CD14-positive monocyte (primary cell): ENCODE measurements at regions of chr1 and their contacts with region 1.

Region 1: DNA sequence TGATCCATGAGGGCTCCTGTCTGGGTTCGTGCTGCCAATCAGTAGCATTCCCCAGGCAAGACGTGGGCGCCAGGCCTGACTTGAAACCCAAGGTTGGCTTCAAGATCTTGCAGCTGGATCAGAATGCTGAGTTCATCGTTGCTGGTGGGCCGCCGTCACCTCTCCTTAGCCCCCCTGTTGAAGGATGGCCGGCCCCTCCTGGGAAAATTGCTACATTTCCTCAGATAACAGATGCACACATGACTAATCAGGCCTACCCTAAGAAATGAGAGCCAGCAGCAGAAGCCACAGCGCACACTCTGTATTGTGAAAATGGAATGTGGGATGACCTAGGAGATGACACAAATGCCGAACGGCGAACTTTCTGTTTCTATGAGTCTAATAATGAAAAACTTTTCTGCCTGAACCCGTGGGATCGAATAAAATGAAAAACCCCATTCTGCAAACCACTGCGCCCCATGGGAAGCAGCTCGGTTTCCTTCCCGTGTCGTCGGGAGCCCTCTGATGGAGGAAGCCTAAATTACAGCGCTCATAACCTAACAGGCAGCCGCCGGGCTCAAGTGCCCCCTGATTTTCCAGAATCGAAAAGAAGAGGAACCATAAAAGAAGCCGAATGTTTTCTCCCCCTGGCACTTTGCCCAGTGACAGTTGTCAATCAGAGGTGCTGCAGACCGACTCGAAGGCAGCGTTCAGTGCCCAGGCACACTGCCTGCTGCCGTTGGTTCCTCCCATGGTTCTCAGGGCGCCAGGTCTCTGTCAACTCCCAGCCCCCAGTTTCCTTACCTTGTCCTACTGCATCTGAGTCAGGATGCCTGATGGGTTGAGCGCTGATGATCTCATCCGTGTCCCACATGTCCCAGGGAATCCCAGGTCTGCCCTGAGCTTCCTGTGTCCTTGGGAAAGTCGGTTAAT is 38.2 kb upstream of the H6PD start:
- DNase-seq: peak; percentile 57 to 74 (median 64)
- H3K4me3 ChIP-seq: peak overlapping the region in 1 of 3 experiments; percentile 51
- H3K4me3 Mint-ChIP-seq: peak overlapping the region; percentile 66 to 83
- H3K27ac ChIP-seq: no peak overlapping the region
- H3K27ac Mint-ChIP-seq: peak overlapping the region; percentile 35 to 85 (median 62)
- H3K4me1 ChIP-seq: peaks cover 19 to 28% of the 10 kb centered on the region in 2 donors
- H3K4me1 Mint-ChIP-seq: peaks cover 40% of the 10 kb centered on the region
- H3K27me3 ChIP-seq: peaks cover 25 to 43% of the 10 kb centered on the region in 2 donors
- H3K27me3 Mint-ChIP-seq: peaks cover 42 to 53% (median 43%) of the 10 kb centered on the region in 3 donors
- CTCF ChIP-seq: peak; percentile 86

Region 2: DNA sequence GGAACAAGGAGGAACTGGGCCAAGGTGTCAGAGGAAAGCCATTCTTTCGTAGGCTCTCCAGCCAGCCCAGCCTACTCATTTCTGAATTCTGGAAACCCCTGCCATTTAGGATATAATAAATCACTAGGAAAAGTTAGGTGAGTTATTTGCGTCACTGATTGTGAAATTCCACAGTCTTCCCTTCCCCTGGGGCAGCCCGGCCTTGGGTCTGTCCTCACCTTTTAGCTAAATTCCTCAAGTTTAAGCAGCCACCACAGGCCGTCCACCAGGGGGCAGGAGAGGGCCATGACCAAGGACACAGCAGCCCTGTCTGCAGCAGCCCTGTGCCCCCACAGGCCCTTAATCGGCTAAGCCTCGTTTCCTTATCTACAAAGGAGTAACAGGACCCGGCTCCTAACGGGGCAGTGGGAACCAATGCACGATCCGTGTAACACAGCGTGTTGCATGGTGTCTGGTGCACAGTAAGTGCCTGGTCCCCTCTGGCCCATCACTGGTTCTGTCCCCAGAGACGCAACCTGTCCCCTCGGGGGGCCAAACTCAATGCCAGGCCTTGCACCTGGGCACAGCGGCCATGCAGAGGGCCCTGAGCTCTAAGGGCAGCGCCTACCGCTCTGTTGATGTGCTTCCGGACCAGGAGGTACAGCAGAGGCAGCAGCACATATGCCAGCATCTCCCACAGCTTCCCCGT is 85.6 kb before region 1 on chr1:
- intact Hi-C with region 1: loop called (anchors 1 kb)
- DNase-seq: peak; percentile 71 to 84 (median 72)
- H3K4me3 ChIP-seq: no peak overlapping the region
- H3K4me3 Mint-ChIP-seq: no peak overlapping the region
- H3K27ac ChIP-seq: no peak overlapping the region
- H3K27ac Mint-ChIP-seq: peak overlapping the region in 3 of 7 donors; percentile 23 to 59 (median 50)
- H3K4me1 ChIP-seq: no peaks in the 10 kb centered on the region
- H3K4me1 Mint-ChIP-seq: peaks cover 9% of the 10 kb centered on the region
- H3K27me3 ChIP-seq: no peaks in the 10 kb centered on the region
- H3K27me3 Mint-ChIP-seq: peaks cover 0 to 4% (median 0%) of the 10 kb centered on the region in 3 donors
- CTCF ChIP-seq: peak; percentile 95

Region 3: DNA sequence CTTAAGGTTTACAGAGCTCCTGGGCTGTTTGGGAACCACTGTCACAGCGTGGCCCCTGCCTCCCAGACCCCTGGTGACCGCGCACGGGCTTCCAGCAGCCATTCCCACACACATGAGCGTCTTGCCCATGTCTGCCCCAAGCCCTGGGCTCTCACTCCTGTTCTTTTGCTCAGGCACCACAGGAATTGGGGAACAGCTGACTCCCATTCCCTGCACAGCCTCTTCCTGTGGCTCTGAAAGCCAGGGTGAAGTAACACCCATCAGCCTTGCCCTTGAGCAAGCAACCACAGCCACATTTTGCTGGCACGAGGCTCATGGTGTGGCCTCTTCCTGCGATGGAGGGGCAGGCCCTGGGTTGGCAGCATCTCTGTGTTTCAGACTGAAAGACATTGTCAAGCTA is 53.1 kb before region 1 on chr1:
- intact Hi-C with region 1: loop called in 1 of 2 experiments (anchors 5 kb)
- DNase-seq: peak; percentile 53 to 75 (median 74)
- H3K4me3 ChIP-seq: peak overlapping the region in 1 of 3 experiments; percentile 0
- H3K4me3 Mint-ChIP-seq: no peak overlapping the region
- H3K27ac ChIP-seq: peak overlapping the region; percentile 22 to 59
- H3K27ac Mint-ChIP-seq: peak overlapping the region in 5 of 7 donors; percentile 35 to 77 (median 46)
- H3K4me1 ChIP-seq: peaks cover 18 to 21% of the 10 kb centered on the region in 2 donors
- H3K4me1 Mint-ChIP-seq: peaks cover 24% of the 10 kb centered on the region
- H3K27me3 ChIP-seq: no peaks in the 10 kb centered on the region
- H3K27me3 Mint-ChIP-seq: peaks cover 5 to 6% (median 5%) of the 10 kb centered on the region in 3 donors
- CTCF ChIP-seq: no peak

Region 4: GRCh38 chr1:10014016-10014415 is 817.6 kb after region 1 on chr1:
- intact Hi-C with region 1: no loop called
- DNase-seq: no peak
- H3K4me3 ChIP-seq: no peak overlapping the region
- H3K4me3 Mint-ChIP-seq: peak overlapping the region in 1 of 2 donors; percentile 39
- H3K27ac ChIP-seq: no peak overlapping the region
- H3K27ac Mint-ChIP-seq: no peak overlapping the region
- H3K4me1 ChIP-seq: no peaks in the 10 kb centered on the region
- H3K4me1 Mint-ChIP-seq: peaks cover 12% of the 10 kb centered on the region
- H3K27me3 ChIP-seq: no peaks in the 10 kb centered on the region
- H3K27me3 Mint-ChIP-seq: peaks cover 2 to 4% (median 3%) of the 10 kb centered on the region in 3 donors
- CTCF ChIP-seq: no peak